CD8-positive, alpha-beta T cell (primary cell): ENCODE measurements at regions of chr3 and their contacts with region 1.

Region 1: GRCh38 chr3:18740631-18741583 is 315.8 kb upstream of the SATB1 start:
- DNase-seq: peak; percentile 24 to 94 (median 51)
- ATAC-seq: peak; percentile 74
- H3K4me3 ChIP-seq: peak overlapping the region; percentile 23 to 31
- H3K4me3 Mint-ChIP-seq: peak overlapping the region; percentile 79
- H3K27ac ChIP-seq: peak overlapping the region; percentile 68 to 86
- H3K27ac Mint-ChIP-seq: peak overlapping the region; percentile 94
- H3K4me1 ChIP-seq: peaks cover 72% of the 10 kb centered on the region
- H3K4me1 Mint-ChIP-seq: peaks cover 84% of the 10 kb centered on the region
- H3K27me3 ChIP-seq: no peaks in the 10 kb centered on the region
- H3K27me3 Mint-ChIP-seq: no peaks in the 10 kb centered on the region
- CTCF ChIP-seq: no peak

Region 2: DNA sequence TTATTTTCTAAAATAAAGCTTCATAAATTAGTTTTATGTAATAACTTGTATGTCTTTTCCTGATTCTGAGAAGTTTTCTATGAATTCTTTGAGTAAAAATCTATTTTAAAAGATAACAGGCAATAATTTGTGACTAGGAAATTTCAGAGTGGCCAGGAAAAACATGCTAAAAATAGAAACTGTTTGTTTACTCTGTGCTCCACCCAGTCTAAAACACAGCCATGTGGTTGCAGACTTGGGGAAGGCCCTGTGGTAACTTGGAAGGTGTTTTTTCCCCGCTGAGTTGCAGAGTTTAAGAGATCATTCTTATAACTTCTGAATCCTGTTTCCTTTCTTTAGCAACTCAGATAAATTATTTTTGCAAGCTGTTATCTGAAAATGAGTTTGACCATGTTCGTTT is 1834.2 kb before region 1 on chr3:
- CTCF ChIA-PET with region 1: no interaction called
- POLR2A ChIA-PET with region 1: no interaction called
- intact Hi-C with region 1: loop called in 1 of 2 experiments (anchors 10 kb)
- DNase-seq: peak in 3 of 9 experiments; percentile 46 to 79 (median 61)
- ATAC-seq: peak; percentile 53
- H3K4me3 ChIP-seq: no peak overlapping the region
- H3K4me3 Mint-ChIP-seq: peak overlapping the region; percentile 29
- H3K27ac ChIP-seq: peak overlapping the region in 1 of 2 experiments; percentile 46
- H3K27ac Mint-ChIP-seq: peak overlapping the region; percentile 35
- H3K4me1 ChIP-seq: peaks cover 72% of the 10 kb centered on the region
- H3K4me1 Mint-ChIP-seq: peaks cover 84% of the 10 kb centered on the region
- H3K27me3 ChIP-seq: no peaks in the 10 kb centered on the region
- H3K27me3 Mint-ChIP-seq: no peaks in the 10 kb centered on the region
- CTCF ChIP-seq: no peak

Region 3: DNA sequence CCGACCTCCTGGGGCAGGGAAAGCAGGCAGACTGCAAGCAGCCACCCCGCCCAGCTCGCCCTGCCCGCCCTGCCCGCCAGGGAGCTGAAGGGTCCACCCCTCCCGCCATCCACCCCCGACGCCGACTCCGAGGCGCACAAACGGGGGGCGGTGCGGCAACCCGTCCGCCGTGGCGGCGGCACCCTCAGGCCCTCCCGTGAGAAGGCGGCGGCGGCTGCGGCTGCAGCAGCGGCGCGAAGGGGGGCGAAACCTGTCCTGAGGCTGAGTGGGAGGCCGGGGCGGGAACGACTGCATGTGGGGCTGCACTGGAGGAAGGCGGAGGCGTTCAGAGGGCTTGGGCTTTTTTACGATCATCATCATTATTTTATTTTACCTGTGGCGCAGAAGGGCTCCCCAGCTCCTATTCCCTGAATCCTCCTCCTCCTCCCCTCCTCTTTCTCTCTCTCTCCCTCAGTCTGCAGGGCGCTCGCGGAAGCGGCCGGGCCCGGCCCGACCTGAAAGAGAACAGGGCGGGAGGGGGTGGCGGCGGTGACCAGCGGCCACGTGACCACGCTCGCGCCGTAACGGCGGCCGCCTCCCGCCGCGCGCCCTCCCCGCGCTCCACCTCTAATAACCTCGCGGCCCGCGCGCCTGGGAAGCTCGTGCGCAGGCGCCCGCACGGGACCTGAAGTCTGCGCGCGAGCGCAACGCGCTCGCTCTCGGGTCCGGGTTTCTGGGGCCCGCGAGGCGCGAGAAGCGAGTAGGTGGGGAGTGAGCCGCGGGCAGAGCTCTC is 998.6 kb before region 1 on chr3 and contains the start of gene TBC1D5:
- CTCF ChIA-PET with region 1: no interaction called
- POLR2A ChIA-PET with region 1: no interaction called
- intact Hi-C with region 1: loop called in 1 of 2 experiments (anchors 10 kb)
- DNase-seq: peak; percentile 78 to 97 (median 88)
- ATAC-seq: peak; percentile 91
- H3K4me3 ChIP-seq: peak within 1 kb of the TSS; percentile 60 to 90
- H3K4me3 Mint-ChIP-seq: peak within 1 kb of the TSS; percentile 91
- H3K27ac ChIP-seq: peak within 1 kb of the TSS; percentile 82 to 87
- H3K27ac Mint-ChIP-seq: peak within 1 kb of the TSS; percentile 84
- H3K4me1 ChIP-seq: peaks cover 16% of the 10 kb centered on the region
- H3K4me1 Mint-ChIP-seq: peaks cover 39% of the 10 kb centered on the region
- H3K27me3 ChIP-seq: no peaks in the 10 kb centered on the region
- H3K27me3 Mint-ChIP-seq: no peaks in the 10 kb centered on the region
- CTCF ChIP-seq: no peak
- total RNA-seq, gene TBC1D5: 29.7 to 30.0 TPM

Region 4: GRCh38 chr3:17915341-17915740 is 825.6 kb before region 1 on chr3:
- CTCF ChIA-PET with region 1: no interaction called
- POLR2A ChIA-PET with region 1: no interaction called
- intact Hi-C with region 1: no loop called
- DNase-seq: no peak
- ATAC-seq: no peak
- H3K4me3 ChIP-seq: no peak overlapping the region
- H3K4me3 Mint-ChIP-seq: no peak overlapping the region
- H3K27ac ChIP-seq: no peak overlapping the region
- H3K27ac Mint-ChIP-seq: no peak overlapping the region
- H3K4me1 ChIP-seq: no peaks in the 10 kb centered on the region
- H3K4me1 Mint-ChIP-seq: no peaks in the 10 kb centered on the region
- H3K27me3 ChIP-seq: no peaks in the 10 kb centered on the region
- H3K27me3 Mint-ChIP-seq: peaks cover 3% of the 10 kb centered on the region
- CTCF ChIP-seq: no peak

Region 5: GRCh38 chr3:17931131-17931530 is 809.8 kb before region 1 on chr3:
- CTCF ChIA-PET with region 1: no interaction called
- POLR2A ChIA-PET with region 1: no interaction called
- intact Hi-C with region 1: no loop called
- DNase-seq: no peak
- ATAC-seq: no peak
- H3K4me3 ChIP-seq: no peak overlapping the region
- H3K4me3 Mint-ChIP-seq: no peak overlapping the region
- H3K27ac ChIP-seq: no peak overlapping the region
- H3K27ac Mint-ChIP-seq: no peak overlapping the region
- H3K4me1 ChIP-seq: no peaks in the 10 kb centered on the region
- H3K4me1 Mint-ChIP-seq: no peaks in the 10 kb centered on the region
- H3K27me3 ChIP-seq: peaks cover 0 to 3% of the 10 kb centered on the region in 2 experiments
- H3K27me3 Mint-ChIP-seq: peaks cover 11% of the 10 kb centered on the region
- CTCF ChIP-seq: no peak

Region 6: DNA sequence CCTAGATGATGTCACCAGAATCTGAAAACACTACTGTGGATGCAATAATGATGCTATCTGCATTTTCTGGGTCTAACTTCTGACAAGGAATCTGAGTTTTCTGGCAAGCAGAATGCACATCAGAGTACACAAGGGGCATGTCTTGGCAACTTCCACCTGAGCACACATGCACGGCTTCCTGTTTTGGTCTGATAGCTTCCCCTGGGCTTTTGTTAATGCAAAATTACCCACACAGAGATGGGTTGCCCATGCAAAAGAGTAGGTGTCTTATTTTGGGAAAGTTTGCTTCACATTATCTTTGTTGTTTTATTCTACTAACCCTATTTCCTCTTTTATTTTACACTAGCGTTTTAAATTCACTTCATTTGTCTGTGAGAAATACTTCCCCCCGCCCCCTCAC is 241.6 kb before region 1 on chr3:
- CTCF ChIA-PET with region 1: no interaction called
- POLR2A ChIA-PET with region 1: no interaction called
- intact Hi-C with region 1: loop called in 1 of 2 experiments (anchors 5 kb)
- DNase-seq: peak in 8 of 9 experiments; percentile 9 to 66 (median 30)
- ATAC-seq: peak; percentile 71
- H3K4me3 ChIP-seq: no peak overlapping the region
- H3K4me3 Mint-ChIP-seq: peak overlapping the region; percentile 63
- H3K27ac ChIP-seq: peak overlapping the region in 1 of 2 experiments; percentile 30
- H3K27ac Mint-ChIP-seq: peak overlapping the region; percentile 88
- H3K4me1 ChIP-seq: peaks cover 19% of the 10 kb centered on the region
- H3K4me1 Mint-ChIP-seq: peaks cover 45% of the 10 kb centered on the region
- H3K27me3 ChIP-seq: no peaks in the 10 kb centered on the region
- H3K27me3 Mint-ChIP-seq: no peaks in the 10 kb centered on the region
- CTCF ChIP-seq: no peak

Region 7: DNA sequence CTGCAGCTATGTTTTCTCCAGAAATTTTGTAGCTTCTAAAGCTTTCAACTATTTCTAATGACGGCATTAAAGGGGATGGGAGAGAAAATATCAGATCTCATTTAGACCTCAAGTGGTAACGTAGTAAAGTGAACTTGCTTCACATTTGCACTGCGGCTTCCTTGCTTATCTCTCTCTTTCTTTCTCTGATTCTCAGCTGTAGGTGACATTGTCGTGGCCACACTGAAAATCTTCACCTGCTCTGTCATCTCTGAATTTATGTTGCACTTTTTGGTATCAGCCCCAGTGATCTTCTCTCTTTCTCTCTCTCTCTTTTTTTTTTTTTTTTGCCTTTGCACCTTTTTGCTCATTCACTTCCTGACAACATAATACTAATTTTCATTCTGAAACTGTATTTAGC is 61.7 kb before region 1 on chr3:
- CTCF ChIA-PET with region 1: no interaction called
- POLR2A ChIA-PET with region 1: interaction called, 3 read pairs
- intact Hi-C with region 1: loop called in 1 of 2 experiments (anchors 5 kb)
- DNase-seq: peak in 7 of 9 experiments; percentile 4 to 84 (median 32)
- ATAC-seq: peak; percentile 91
- H3K4me3 ChIP-seq: no peak overlapping the region
- H3K4me3 Mint-ChIP-seq: peak overlapping the region; percentile 50
- H3K27ac ChIP-seq: peak overlapping the region in 1 of 2 experiments; percentile 61
- H3K27ac Mint-ChIP-seq: peak overlapping the region; percentile 75
- H3K4me1 ChIP-seq: peaks cover 39% of the 10 kb centered on the region
- H3K4me1 Mint-ChIP-seq: peaks cover 68% of the 10 kb centered on the region
- H3K27me3 ChIP-seq: no peaks in the 10 kb centered on the region
- H3K27me3 Mint-ChIP-seq: no peaks in the 10 kb centered on the region
- CTCF ChIP-seq: no peak

Region 8: GRCh38 chr3:18725668-18726407 is 15.1 kb before region 1 on chr3:
- CTCF ChIA-PET with region 1: interaction called, 5 read pairs
- POLR2A ChIA-PET with region 1: interaction called, 5 read pairs
- intact Hi-C with region 1: loop called in 1 of 2 experiments (anchors 1 kb)
- DNase-seq: peak in 8 of 9 experiments; percentile 21 to 77 (median 36)
- ATAC-seq: peak; percentile 79
- H3K4me3 ChIP-seq: peak overlapping the region; percentile 2 to 39
- H3K4me3 Mint-ChIP-seq: peak overlapping the region; percentile 54
- H3K27ac ChIP-seq: peak overlapping the region; percentile 38 to 82
- H3K27ac Mint-ChIP-seq: peak overlapping the region; percentile 97
- H3K4me1 ChIP-seq: peaks cover 64% of the 10 kb centered on the region
- H3K4me1 Mint-ChIP-seq: peaks cover 80% of the 10 kb centered on the region
- H3K27me3 ChIP-seq: no peaks in the 10 kb centered on the region
- H3K27me3 Mint-ChIP-seq: no peaks in the 10 kb centered on the region
- CTCF ChIP-seq: no peak

Region 9: GRCh38 chr3:18751514-18751913 is 10.6 kb after region 1 on chr3:
- CTCF ChIA-PET with region 1: interaction called, 5 read pairs
- POLR2A ChIA-PET with region 1: no interaction called
- intact Hi-C with region 1: loop called in 1 of 2 experiments (anchors 1 kb)
- DNase-seq: no peak
- ATAC-seq: no peak
- H3K4me3 ChIP-seq: no peak overlapping the region
- H3K4me3 Mint-ChIP-seq: no peak overlapping the region
- H3K27ac ChIP-seq: no peak overlapping the region
- H3K27ac Mint-ChIP-seq: no peak overlapping the region
- H3K4me1 ChIP-seq: peaks cover 8% of the 10 kb centered on the region
- H3K4me1 Mint-ChIP-seq: peaks cover 63% of the 10 kb centered on the region
- H3K27me3 ChIP-seq: no peaks in the 10 kb centered on the region
- H3K27me3 Mint-ChIP-seq: no peaks in the 10 kb centered on the region
- CTCF ChIP-seq: no peak

Region 10: GRCh38 chr3:18853269-18853668 is 112.4 kb after region 1 on chr3:
- CTCF ChIA-PET with region 1: no interaction called
- POLR2A ChIA-PET with region 1: no interaction called
- intact Hi-C with region 1: no loop called
- DNase-seq: no peak
- ATAC-seq: no peak
- H3K4me3 ChIP-seq: no peak overlapping the region
- H3K4me3 Mint-ChIP-seq: no peak overlapping the region
- H3K27ac ChIP-seq: no peak overlapping the region
- H3K27ac Mint-ChIP-seq: no peak overlapping the region
- H3K4me1 ChIP-seq: no peaks in the 10 kb centered on the region
- H3K4me1 Mint-ChIP-seq: no peaks in the 10 kb centered on the region
- H3K27me3 ChIP-seq: no peaks in the 10 kb centered on the region
- H3K27me3 Mint-ChIP-seq: peaks cover 4% of the 10 kb centered on the region
- CTCF ChIP-seq: no peak